Activated CD4-positive, alpha-beta T cell treated with anti-CD3 and anti-CD28 coated beads for 36 hours (primary cell): ENCODE measurements at regions of chr15 and their contacts with region 1.

Region 1: GRCh38 chr15:73964736-73965093 is 27.4 kb downstream of the STOML1 start:
- DNase-seq: peak; percentile 93
- ATAC-seq: peak; percentile 74
- H3K4me3 Mint-ChIP-seq: peak overlapping the region; percentile 66
- H3K27ac Mint-ChIP-seq: peak overlapping the region; percentile 76
- H3K4me1 Mint-ChIP-seq: peaks cover 27% of the 10 kb centered on the region
- H3K27me3 Mint-ChIP-seq: no peaks in the 10 kb centered on the region

Region 2: GRCh38 chr15:73873889-73874511 is 90.7 kb before region 1 on chr15:
- CTCF ChIA-PET with region 1: interaction called, 8 read pairs
- POLR2A ChIA-PET with region 1: no interaction called
- intact Hi-C with region 1: loop called (anchors 1 kb)
- DNase-seq: peak; percentile 50
- ATAC-seq: no peak
- H3K4me3 Mint-ChIP-seq: no peak overlapping the region
- H3K27ac Mint-ChIP-seq: no peak overlapping the region
- H3K4me1 Mint-ChIP-seq: no peaks in the 10 kb centered on the region
- H3K27me3 Mint-ChIP-seq: peaks cover 26% of the 10 kb centered on the region

Region 3: DNA sequence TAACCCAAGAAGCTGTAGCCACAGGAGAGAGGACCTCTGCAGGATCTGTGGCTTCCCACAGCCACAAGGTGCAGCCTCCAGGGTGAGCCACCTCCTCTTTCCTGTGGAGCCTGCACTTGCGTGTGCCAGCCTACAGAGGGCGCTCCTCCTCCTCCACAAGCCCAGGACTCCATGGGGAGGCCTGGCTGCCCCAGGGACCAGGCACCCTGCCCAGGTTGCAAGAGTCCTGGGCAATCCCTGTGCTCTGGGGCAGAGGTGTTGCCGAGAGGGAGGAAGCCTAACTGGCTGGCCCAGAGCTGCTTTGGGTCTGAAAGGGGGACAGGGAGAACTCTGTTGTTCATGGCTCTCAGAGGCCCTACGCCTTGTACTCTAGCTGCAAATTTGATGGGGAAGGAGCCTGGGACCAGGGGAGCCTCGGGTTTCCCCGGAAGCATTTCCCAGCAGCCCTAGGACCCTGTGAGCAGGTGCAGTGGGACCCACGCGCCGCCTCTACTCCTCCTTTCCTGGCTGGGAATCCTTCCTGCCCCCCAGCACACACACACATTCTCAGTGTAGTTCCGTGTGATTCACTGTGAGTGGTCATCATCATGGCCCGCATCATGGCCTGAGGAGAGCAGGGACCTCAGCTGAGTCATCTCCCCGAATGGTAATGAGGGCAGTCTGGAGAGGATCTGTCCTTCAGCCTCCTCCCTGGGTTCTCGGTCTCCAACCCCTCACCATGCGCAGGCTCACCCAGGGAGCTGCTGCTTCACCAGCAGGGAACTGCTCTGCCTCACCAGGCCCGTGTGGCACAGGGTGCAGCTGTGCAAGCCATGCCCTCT is 67.1 kb before region 1 on chr15:
- CTCF ChIA-PET with region 1: interaction called, 4 read pairs
- POLR2A ChIA-PET with region 1: no interaction called
- intact Hi-C with region 1: loop called in 1 of 2 experiments (anchors 1 kb)
- DNase-seq: peak; percentile 85
- ATAC-seq: peak; percentile 95
- H3K4me3 Mint-ChIP-seq: no peak overlapping the region
- H3K27ac Mint-ChIP-seq: no peak overlapping the region
- H3K4me1 Mint-ChIP-seq: no peaks in the 10 kb centered on the region
- H3K27me3 Mint-ChIP-seq: no peaks in the 10 kb centered on the region

Region 4: GRCh38 chr15:73927476-73928240 is 37.1 kb before region 1 on chr15:
- CTCF ChIA-PET with region 1: interaction called, 8 read pairs
- POLR2A ChIA-PET with region 1: no interaction called
- intact Hi-C with region 1: loop called (anchors 1 to 5 kb)
- DNase-seq: peak; percentile 87
- ATAC-seq: peak; percentile 77
- H3K4me3 Mint-ChIP-seq: peak overlapping the region; percentile 72
- H3K27ac Mint-ChIP-seq: peak overlapping the region; percentile 42
- H3K4me1 Mint-ChIP-seq: peaks cover 35% of the 10 kb centered on the region
- H3K27me3 Mint-ChIP-seq: no peaks in the 10 kb centered on the region

Region 5: GRCh38 chr15:73950831-73951561 is 13.7 kb before region 1 on chr15:
- CTCF ChIA-PET with region 1: interaction called, 27 read pairs
- POLR2A ChIA-PET with region 1: no interaction called
- intact Hi-C with region 1: loop called in 1 of 2 experiments (anchors 1 kb)
- DNase-seq: peak; percentile 85
- ATAC-seq: peak; percentile 95
- H3K4me3 Mint-ChIP-seq: no peak overlapping the region
- H3K27ac Mint-ChIP-seq: no peak overlapping the region
- H3K4me1 Mint-ChIP-seq: peaks cover 4% of the 10 kb centered on the region
- H3K27me3 Mint-ChIP-seq: no peaks in the 10 kb centered on the region

Region 6: DNA sequence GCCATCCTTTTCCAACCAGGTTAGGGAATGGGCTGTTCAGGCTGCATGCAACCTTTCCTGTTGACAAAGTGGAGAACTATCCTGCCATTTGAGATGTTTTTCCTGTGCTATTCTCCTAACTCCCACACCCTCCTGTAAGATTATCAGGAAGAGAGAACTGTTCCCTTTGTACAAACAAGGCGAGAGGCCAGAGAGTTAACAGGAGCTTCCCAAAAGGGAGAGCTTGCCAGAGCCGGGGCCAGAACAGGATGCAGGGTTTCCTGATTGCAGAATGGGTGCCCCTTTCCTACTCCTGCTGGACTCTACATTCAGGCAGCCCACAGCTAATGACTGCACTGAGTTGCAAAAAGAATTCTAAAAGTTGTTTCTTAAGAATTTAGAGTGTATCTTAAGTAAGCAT is 46.9 kb after region 1 on chr15:
- CTCF ChIA-PET with region 1: interaction called, 6 read pairs
- POLR2A ChIA-PET with region 1: no interaction called
- intact Hi-C with region 1: loop called in 1 of 2 experiments (anchors 1 kb)
- DNase-seq: no peak
- ATAC-seq: no peak
- H3K4me3 Mint-ChIP-seq: no peak overlapping the region
- H3K27ac Mint-ChIP-seq: no peak overlapping the region
- H3K4me1 Mint-ChIP-seq: peaks cover 53% of the 10 kb centered on the region
- H3K27me3 Mint-ChIP-seq: no peaks in the 10 kb centered on the region

Region 7: GRCh38 chr15:74047781-74048180 is 83.1 kb after region 1 on chr15:
- CTCF ChIA-PET with region 1: interaction called, 11 read pairs
- POLR2A ChIA-PET with region 1: no interaction called
- intact Hi-C with region 1: no loop called
- DNase-seq: no peak
- ATAC-seq: no peak
- H3K4me3 Mint-ChIP-seq: no peak overlapping the region
- H3K27ac Mint-ChIP-seq: no peak overlapping the region
- H3K4me1 Mint-ChIP-seq: peaks cover 10% of the 10 kb centered on the region
- H3K27me3 Mint-ChIP-seq: no peaks in the 10 kb centered on the region

Region 8: GRCh38 chr15:74651242-74651741 is 686.6 kb after region 1 on chr15:
- CTCF ChIA-PET with region 1: no interaction called
- POLR2A ChIA-PET with region 1: no interaction called
- intact Hi-C with region 1: no loop called
- DNase-seq: no peak
- ATAC-seq: no peak
- H3K4me3 Mint-ChIP-seq: no peak overlapping the region
- H3K27ac Mint-ChIP-seq: no peak overlapping the region
- H3K4me1 Mint-ChIP-seq: peaks cover 5% of the 10 kb centered on the region
- H3K27me3 Mint-ChIP-seq: no peaks in the 10 kb centered on the region